Lower leg skin (tissue), 4 donors: ENCODE measurements at regions of chr2 and their contacts with region 1.

Region 1: GRCh38 chr2:21118302-21118920 is 5.4 kb upstream of the TDRD15 start:
- DNase-seq: peak in 1 of 2 donors; percentile 21
- H3K4me3 ChIP-seq: no peak overlapping the region
- CTCF ChIP-seq: no peak
- POLR2A ChIP-seq: no peak

Region 2: DNA sequence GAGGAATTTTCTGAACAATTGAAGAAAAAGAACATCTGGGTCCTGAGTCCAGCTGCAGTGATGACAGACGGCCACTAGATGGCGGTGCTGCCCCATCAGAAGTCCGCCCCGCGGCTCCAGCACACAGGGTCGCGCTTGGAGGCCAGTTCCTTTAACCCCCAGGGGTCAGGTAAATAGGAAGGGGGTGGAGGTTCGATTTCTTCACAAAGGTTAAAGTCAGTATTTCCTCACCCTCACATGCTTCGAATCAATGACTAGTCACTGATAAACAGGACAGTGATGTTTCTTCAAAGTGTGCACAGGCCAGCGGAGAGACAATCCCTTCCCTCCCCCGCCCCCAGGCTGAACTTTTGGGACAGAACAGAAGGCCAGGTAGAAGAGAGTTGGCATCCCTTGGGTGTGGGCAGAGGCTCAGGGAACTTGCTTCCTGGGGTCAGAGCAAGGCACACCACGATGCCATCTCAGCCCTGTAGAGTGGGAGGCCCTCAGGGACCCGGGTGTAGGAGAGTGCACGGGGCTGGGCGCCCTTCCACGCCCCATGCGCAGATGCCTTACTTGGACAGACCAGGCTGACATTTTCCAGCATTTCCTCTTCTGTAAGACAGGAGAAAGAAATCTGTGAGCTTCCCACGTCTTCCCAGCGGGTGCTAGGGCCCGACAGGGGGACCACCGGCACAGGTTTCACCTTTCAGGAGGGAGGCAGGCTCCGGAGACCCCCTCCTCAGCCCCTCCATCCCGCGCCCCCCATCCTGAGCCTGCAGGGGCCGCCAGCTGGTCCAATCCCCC is 75.3 kb before region 1 on chr2:
- intact Hi-C with region 1: loop called (anchors 10 kb)
- DNase-seq: peak; percentile 53 to 91
- H3K4me3 ChIP-seq: no peak overlapping the region
- CTCF ChIP-seq: peak in 2 of 3 donors; percentile 81 to 84
- POLR2A ChIP-seq: no peak